B cell (primary cell): ENCODE measurements at regions of chr1 and their contacts with region 1.

Region 1: DNA sequence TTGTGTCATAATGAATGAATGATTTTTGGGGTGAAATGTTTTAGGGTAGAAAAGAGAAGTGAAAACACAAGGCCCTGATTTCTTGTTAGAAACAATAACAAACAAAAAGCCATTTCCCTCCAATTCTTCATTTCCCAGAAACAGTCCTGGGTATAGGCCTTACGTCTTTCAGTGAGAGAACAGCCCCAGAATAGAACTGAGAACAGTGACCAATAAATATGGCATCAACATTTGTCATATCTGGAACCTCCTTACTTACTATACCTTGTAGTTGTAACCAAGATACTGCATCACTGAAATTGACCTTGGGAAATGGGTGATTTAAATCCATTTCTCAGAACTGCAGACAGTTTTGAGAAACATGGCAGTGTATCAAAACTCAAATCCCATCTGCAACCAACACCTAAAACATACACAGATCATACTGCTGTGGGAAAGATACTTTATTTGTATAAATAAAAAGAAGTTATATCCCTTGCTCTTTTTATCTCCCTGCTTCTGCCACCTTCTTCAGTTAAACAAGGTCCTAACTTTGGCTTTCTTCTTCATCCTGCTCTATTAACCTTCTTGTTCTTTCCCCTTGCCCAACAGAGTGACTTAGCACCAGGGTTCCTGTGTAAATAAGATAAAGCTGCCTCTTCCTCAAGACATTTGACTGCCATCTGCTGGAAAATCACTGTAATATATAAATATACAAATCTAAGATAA is 19.5 kb downstream of the XKR8 start:
- DNase-seq: peak; percentile 72
- ATAC-seq: peak; percentile 51
- H3K4me3 ChIP-seq: no peak overlapping the region
- H3K4me3 Mint-ChIP-seq: no peak overlapping the region
- H3K27ac ChIP-seq: no peak overlapping the region
- H3K27ac Mint-ChIP-seq: peak overlapping the region; percentile 2
- H3K4me1 ChIP-seq: peaks cover 0 to 7% of the 10 kb centered on the region in 2 donors
- H3K4me1 Mint-ChIP-seq: peaks cover 4% of the 10 kb centered on the region
- H3K27me3 ChIP-seq: no peaks in the 10 kb centered on the region
- H3K27me3 Mint-ChIP-seq: no peaks in the 10 kb centered on the region
- CTCF ChIP-seq: peak; percentile 81

Region 2: GRCh38 chr1:27915082-27915598 is 64.2 kb before region 1 on chr1:
- CTCF ChIA-PET with region 1: interaction called, 11 read pairs
- POLR2A ChIA-PET with region 1: no interaction called
- intact Hi-C with region 1: no loop called
- DNase-seq: no peak
- ATAC-seq: no peak
- H3K4me3 ChIP-seq: peak overlapping the region; percentile 34 to 98 (median 87)
- H3K4me3 Mint-ChIP-seq: peak overlapping the region; percentile 97
- H3K27ac ChIP-seq: peak overlapping the region; percentile 92
- H3K27ac Mint-ChIP-seq: peak overlapping the region; percentile 96
- H3K4me1 ChIP-seq: peaks cover 5 to 14% of the 10 kb centered on the region in 2 donors
- H3K4me1 Mint-ChIP-seq: peaks cover 17% of the 10 kb centered on the region
- H3K27me3 ChIP-seq: no peaks in the 10 kb centered on the region
- H3K27me3 Mint-ChIP-seq: peaks cover 12% of the 10 kb centered on the region
- CTCF ChIP-seq: no peak

Region 3: DNA sequence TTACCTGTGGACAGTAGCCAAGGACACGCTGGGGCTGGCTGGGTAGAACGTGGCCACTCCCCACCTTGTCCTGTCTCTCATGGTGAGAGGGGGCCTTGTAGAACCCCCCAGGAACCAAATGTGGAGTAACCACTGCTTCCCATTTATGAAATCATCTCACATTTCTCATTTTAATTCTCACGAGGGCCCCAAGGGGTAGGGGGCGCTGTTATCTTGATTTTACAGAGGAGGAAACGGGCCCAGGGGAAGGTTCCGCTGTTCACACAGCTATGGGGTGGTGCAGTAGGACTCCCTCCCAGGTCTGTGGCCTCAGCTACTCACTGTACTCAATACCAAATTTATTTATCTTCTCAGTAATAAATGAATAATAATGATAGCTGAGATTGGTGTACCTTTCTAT is 39.0 kb before region 1 on chr1:
- CTCF ChIA-PET with region 1: interaction called, 22 read pairs
- POLR2A ChIA-PET with region 1: no interaction called
- intact Hi-C with region 1: loop called (anchors 1 kb)
- DNase-seq: peak; percentile 71
- ATAC-seq: peak; percentile 78
- H3K4me3 ChIP-seq: no peak overlapping the region
- H3K4me3 Mint-ChIP-seq: no peak overlapping the region
- H3K27ac ChIP-seq: no peak overlapping the region
- H3K27ac Mint-ChIP-seq: no peak overlapping the region
- H3K4me1 ChIP-seq: peaks cover 4 to 8% of the 10 kb centered on the region in 2 donors
- H3K4me1 Mint-ChIP-seq: peaks cover 8% of the 10 kb centered on the region
- H3K27me3 ChIP-seq: peaks cover 0 to 12% (median 5%) of the 10 kb centered on the region in 4 experiments
- H3K27me3 Mint-ChIP-seq: peaks cover 8% of the 10 kb centered on the region
- CTCF ChIP-seq: peak; percentile 60

Region 4: GRCh38 chr1:27992276-27992675 is 13.0 kb after region 1 on chr1:
- CTCF ChIA-PET with region 1: interaction called, 18 read pairs
- POLR2A ChIA-PET with region 1: interaction called, 6 read pairs
- intact Hi-C with region 1: no loop called
- DNase-seq: peak; percentile 26
- ATAC-seq: no peak
- H3K4me3 ChIP-seq: no peak overlapping the region
- H3K4me3 Mint-ChIP-seq: no peak overlapping the region
- H3K27ac ChIP-seq: peak overlapping the region in 1 of 2 donors; percentile 54
- H3K27ac Mint-ChIP-seq: peak overlapping the region; percentile 74
- H3K4me1 ChIP-seq: peaks cover 4 to 7% of the 10 kb centered on the region in 2 donors
- H3K4me1 Mint-ChIP-seq: peaks cover 6% of the 10 kb centered on the region
- H3K27me3 ChIP-seq: no peaks in the 10 kb centered on the region
- H3K27me3 Mint-ChIP-seq: no peaks in the 10 kb centered on the region
- CTCF ChIP-seq: no peak

Region 5: DNA sequence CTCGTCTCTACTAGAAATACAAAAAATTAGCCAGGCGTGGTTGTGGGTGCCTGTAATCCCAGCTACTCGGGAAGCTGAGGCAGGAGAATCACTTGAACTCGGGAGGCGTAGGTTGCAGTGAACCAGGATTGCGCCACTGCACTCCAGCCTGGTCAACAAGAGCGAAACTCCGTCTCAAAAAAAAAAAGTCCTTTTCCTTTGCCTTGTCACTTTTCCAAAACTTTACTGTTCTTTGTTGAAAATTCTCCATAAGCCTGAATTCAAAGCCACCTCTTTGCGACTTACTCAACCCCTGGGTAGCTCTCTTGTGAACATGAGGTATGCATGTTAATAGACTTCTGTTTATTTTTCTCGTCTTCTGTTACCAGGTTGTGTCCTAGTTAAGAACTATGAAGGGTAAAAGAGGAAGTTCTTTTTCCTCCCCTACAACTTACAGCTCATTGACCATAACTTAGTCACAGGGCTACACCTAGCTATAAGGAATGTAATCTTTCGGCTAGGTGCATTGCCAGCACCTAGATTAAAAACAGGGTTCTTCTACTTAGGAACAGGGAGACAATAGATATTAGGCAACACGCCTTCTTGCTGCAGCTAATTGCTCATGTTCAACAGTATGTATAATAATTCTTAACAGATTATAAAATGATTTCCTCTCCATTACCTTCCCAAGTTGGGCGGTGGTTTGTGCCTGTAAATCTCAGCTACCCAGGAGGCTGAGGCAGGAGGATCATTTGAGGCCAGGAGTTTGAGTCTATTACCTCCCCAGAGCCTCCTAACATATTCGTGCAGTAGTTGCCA is 156.3 kb after region 1 on chr1:
- CTCF ChIA-PET with region 1: no interaction called
- POLR2A ChIA-PET with region 1: interaction called, 12 read pairs
- intact Hi-C with region 1: no loop called
- DNase-seq: peak; percentile 74
- ATAC-seq: peak; percentile 90
- H3K4me3 ChIP-seq: peak overlapping the region in 1 of 5 experiments; percentile 21
- H3K4me3 Mint-ChIP-seq: peak overlapping the region; percentile 54
- H3K27ac ChIP-seq: peak overlapping the region; percentile 1 to 42
- H3K27ac Mint-ChIP-seq: peak overlapping the region; percentile 13
- H3K4me1 ChIP-seq: peaks cover 35 to 61% of the 10 kb centered on the region in 2 donors
- H3K4me1 Mint-ChIP-seq: peaks cover 62% of the 10 kb centered on the region
- H3K27me3 ChIP-seq: no peaks in the 10 kb centered on the region
- H3K27me3 Mint-ChIP-seq: no peaks in the 10 kb centered on the region
- CTCF ChIP-seq: no peak

Region 6: GRCh38 chr1:28744184-28744583 is 764.9 kb after region 1 on chr1:
- CTCF ChIA-PET with region 1: no interaction called
- POLR2A ChIA-PET with region 1: no interaction called
- intact Hi-C with region 1: no loop called
- DNase-seq: no peak
- ATAC-seq: no peak
- H3K4me3 ChIP-seq: no peak overlapping the region
- H3K4me3 Mint-ChIP-seq: peak overlapping the region; percentile 29
- H3K27ac ChIP-seq: no peak overlapping the region
- H3K27ac Mint-ChIP-seq: peak overlapping the region; percentile 42
- H3K4me1 ChIP-seq: peaks cover 23% of the 10 kb centered on the region in 2 donors
- H3K4me1 Mint-ChIP-seq: peaks cover 58% of the 10 kb centered on the region
- H3K27me3 ChIP-seq: no peaks in the 10 kb centered on the region
- H3K27me3 Mint-ChIP-seq: no peaks in the 10 kb centered on the region
- CTCF ChIP-seq: no peak